Activated CD8-positive, alpha-beta memory T cell treated with anti-CD3 and anti-CD28 coated beads, Interleukin-2, amount 10 ng/mL, durations not matched to agents 7 days and 5 days (primary cell): ENCODE measurements at regions of chr1 and their contacts with region 1.

Region 1: GRCh38 chr1:110780600-110781484 is 92.1 kb upstream of the CD53 start:
- DNase-seq: peak; percentile 86
- ATAC-seq: peak; percentile 78
- H3K4me3 Mint-ChIP-seq: no peak overlapping the region
- H3K27ac Mint-ChIP-seq: no peak overlapping the region
- H3K4me1 Mint-ChIP-seq: peaks cover 32% of the 10 kb centered on the region
- H3K27me3 Mint-ChIP-seq: peaks cover 5% of the 10 kb centered on the region

Region 2: DNA sequence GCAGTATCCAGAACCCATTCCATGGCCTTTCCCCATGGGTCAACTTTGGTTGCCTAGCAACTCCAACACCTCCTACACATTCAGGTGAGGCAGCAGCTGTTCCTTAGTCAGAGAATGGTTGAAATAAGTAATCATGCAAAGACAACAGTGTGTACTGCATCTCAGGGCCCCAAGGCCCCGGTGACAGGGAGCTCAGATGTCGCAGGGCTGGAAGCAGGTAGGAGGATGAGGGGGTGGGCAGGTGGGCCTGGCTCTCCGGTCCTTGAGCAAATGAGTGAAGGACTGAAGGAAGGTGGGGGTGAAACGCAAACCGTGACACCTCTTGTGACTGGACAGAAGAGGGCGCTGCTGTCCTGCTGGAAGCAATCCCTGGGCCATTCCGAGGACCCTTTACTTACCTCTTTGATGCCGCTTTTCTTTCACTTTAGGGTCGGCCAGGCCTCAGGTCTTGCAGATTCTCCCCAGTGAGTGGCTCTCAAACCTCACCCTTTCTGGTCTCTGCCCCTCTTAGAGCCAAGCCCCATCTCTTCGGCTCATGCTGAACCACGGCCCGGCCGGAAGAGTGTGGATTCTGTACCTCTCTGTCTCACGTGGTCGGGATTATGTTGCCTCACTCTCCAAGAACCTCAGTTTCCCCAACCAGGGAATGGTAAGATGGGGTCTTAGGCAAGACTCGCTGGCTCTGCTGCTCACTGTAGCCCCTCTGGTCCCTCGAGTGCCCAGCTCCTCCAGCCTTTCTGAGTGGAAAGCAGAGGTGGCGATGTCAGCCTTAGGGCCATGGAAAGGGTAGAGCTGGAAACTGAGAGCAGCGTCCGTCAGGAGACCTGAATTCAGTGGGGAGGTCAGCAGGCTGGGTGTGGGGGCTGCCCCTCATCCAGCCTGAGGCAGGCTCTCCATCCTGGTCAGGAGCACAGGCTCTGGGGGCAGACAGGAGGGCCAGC is 256.3 kb before region 1 on chr1:
- CTCF ChIA-PET with region 1: interaction called, 51 read pairs
- DNase-seq: peak; percentile 69
- ATAC-seq: peak; percentile 80
- H3K4me3 Mint-ChIP-seq: peak overlapping the region; percentile 30
- H3K27ac Mint-ChIP-seq: no peak overlapping the region
- H3K4me1 Mint-ChIP-seq: no peaks in the 10 kb centered on the region
- H3K27me3 Mint-ChIP-seq: peaks cover 52% of the 10 kb centered on the region

Region 3: DNA sequence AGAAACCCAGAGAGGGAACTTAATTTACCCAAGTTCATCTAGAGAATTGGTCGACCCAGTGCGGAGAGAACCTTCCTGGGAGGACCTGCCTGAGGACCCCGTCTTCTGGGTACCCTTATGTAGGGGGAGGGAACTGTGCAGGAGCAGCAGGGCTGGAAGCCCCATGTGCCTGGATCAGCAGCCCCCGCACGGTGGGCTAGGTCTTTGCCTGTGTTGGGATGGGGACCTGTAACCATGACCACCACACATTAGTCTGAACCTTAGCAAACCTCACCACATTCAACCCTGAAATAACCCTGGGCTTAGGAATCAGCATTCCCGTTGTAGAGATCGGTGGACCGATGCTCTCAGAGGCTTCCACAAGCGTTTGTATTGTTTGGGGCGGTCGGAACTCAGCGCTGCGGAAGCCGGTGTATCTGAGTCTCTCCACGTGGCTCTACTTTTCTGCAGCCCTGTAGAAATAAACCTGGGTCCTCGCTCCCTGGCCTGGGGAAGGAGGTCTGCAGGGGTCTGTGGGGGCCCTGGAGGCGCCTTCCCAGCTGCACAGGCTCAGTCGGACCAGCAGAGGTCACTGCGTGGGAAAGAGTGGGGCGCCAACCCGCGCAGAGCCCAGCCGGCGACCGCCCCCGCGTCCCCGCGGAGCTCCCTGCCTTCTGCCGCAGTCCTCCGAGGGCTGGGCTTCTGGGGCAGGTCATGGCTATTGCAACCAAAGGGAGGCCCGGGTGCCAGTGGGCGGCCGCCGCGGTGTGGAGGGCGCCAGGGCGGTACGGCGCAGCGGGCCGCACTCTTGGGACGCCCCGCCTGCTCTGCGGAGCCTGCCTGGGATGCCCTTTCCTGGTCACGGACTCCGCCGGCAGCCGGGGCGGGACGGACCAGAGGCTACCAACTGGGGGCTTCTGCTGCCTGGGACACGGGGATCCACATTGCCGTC is 225.7 kb before region 1 on chr1:
- CTCF ChIA-PET with region 1: interaction called, 70 read pairs
- DNase-seq: peak; percentile 64
- ATAC-seq: peak; percentile 90
- H3K4me3 Mint-ChIP-seq: no peak overlapping the region
- H3K27ac Mint-ChIP-seq: no peak overlapping the region
- H3K4me1 Mint-ChIP-seq: peaks cover 8% of the 10 kb centered on the region
- H3K27me3 Mint-ChIP-seq: peaks cover 54% of the 10 kb centered on the region

Region 4: GRCh38 chr1:110605901-110606656 is 174.8 kb before region 1 on chr1 and contains the start of gene KCNA2:
- CTCF ChIA-PET with region 1: interaction called, 13 read pairs
- DNase-seq: no peak
- ATAC-seq: peak; percentile 46
- H3K4me3 Mint-ChIP-seq: peak within 1 kb of the TSS; percentile 74
- H3K27ac Mint-ChIP-seq: no peak within 1 kb of the TSS
- H3K4me1 Mint-ChIP-seq: peaks cover 22% of the 10 kb centered on the region
- H3K27me3 Mint-ChIP-seq: peaks cover 42% of the 10 kb centered on the region
- total RNA-seq, gene KCNA2: 2.4 to 3.7 TPM

Region 5: GRCh38 chr1:110630839-110631663 is 149.8 kb before region 1 on chr1:
- CTCF ChIA-PET with region 1: interaction called, 27 read pairs
- DNase-seq: peak; percentile 95
- ATAC-seq: peak; percentile 84
- H3K4me3 Mint-ChIP-seq: no peak overlapping the region
- H3K27ac Mint-ChIP-seq: no peak overlapping the region
- H3K4me1 Mint-ChIP-seq: peaks cover 33% of the 10 kb centered on the region
- H3K27me3 Mint-ChIP-seq: no peaks in the 10 kb centered on the region

Region 6: GRCh38 chr1:110829955-110830553 is 49.2 kb after region 1 on chr1:
- CTCF ChIA-PET with region 1: interaction called, 104 read pairs
- DNase-seq: peak; percentile 46
- ATAC-seq: peak; percentile 83
- H3K4me3 Mint-ChIP-seq: no peak overlapping the region
- H3K27ac Mint-ChIP-seq: no peak overlapping the region
- H3K4me1 Mint-ChIP-seq: peaks cover 5% of the 10 kb centered on the region
- H3K27me3 Mint-ChIP-seq: peaks cover 5% of the 10 kb centered on the region

Region 7: DNA sequence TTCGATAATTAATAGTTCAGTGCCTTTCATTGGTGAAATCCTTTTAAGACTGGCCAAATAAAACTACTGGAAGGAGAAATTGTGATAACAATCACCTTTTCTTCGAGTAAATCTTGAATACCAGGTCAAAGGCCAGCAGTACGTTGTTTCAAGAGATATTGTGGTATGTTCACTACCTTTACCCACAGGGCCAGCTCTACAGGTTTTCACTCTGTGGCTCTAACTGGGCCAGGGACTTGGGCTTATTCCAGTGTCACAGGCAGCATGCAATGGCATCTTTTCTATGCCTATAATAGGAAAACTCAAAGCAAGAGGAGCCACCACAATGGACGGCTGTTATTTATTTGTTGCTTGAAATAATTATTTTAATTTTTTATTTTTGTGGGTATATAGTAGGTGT is 209.7 kb after region 1 on chr1:
- CTCF ChIA-PET with region 1: interaction called, 17 read pairs
- DNase-seq: no peak
- ATAC-seq: no peak
- H3K4me3 Mint-ChIP-seq: no peak overlapping the region
- H3K27ac Mint-ChIP-seq: no peak overlapping the region
- H3K4me1 Mint-ChIP-seq: peaks cover 12% of the 10 kb centered on the region
- H3K27me3 Mint-ChIP-seq: peaks cover 26% of the 10 kb centered on the region